ENCODE measurements at regions of chr14 and their contacts with region 1.

Region 1: GRCh38 chr14:96275177-96276112 is 19.4 kb downstream of the BDKRB1 start:
- DNase-seq: peak; percentile 70 to 86 (median 79)
- H3K4me3 ChIP-seq: no peak overlapping the region
- H3K27ac ChIP-seq: no peak overlapping the region
- H3K4me1 ChIP-seq: no peaks in the 10 kb centered on the region
- H3K27me3 ChIP-seq: no peaks in the 10 kb centered on the region
- CTCF ChIP-seq: peak; percentile 56 to 70 (median 62)
- EP300 ChIP-seq: no peak
- POLR2A ChIP-seq: no peak

Region 2: GRCh38 chr14:95993768-95994592 is 281.5 kb before region 1 on chr14:
- intact Hi-C with region 1: loop called in 1 of 4 experiments (anchors 10 kb)
- DNase-seq: peak in 4 of 5 donors; percentile 11 to 37 (median 18)
- H3K4me3 ChIP-seq: no peak overlapping the region
- H3K27ac ChIP-seq: no peak overlapping the region
- H3K4me1 ChIP-seq: no peaks in the 10 kb centered on the region
- H3K27me3 ChIP-seq: no peaks in the 10 kb centered on the region
- CTCF ChIP-seq: peak in 2 of 3 donors; percentile 54 to 72
- EP300 ChIP-seq: no peak
- POLR2A ChIP-seq: no peak